Mucosa of descending colon (tissue), 3 donors: ENCODE measurements at regions of chr15 and their contacts with region 1.

Region 1: GRCh38 chr15:99143655-99144610 is 39.1 kb downstream of the SYNM start:
- DNase-seq: peak in 1 of 3 donors; percentile 19
- ATAC-seq: peak; percentile 84
- H3K4me3 ChIP-seq: no peak overlapping the region
- H3K4me1 ChIP-seq: peaks cover 8% of the 10 kb centered on the region
- CTCF ChIP-seq: no peak

Region 2: GRCh38 chr15:98760112-98760826 is 383.7 kb before region 1 on chr15:
- intact Hi-C with region 1: no loop called
- DNase-seq: no peak
- ATAC-seq: no peak
- H3K4me3 ChIP-seq: no peak overlapping the region
- H3K4me1 ChIP-seq: no peaks in the 10 kb centered on the region
- CTCF ChIP-seq: no peak

Region 3: GRCh38 chr15:99197856-99198255 is 53.9 kb after region 1 on chr15:
- intact Hi-C with region 1: loop called in 1 of 2 experiments (anchors 5 kb)
- DNase-seq: no peak
- ATAC-seq: no peak
- H3K4me3 ChIP-seq: no peak overlapping the region
- H3K4me1 ChIP-seq: no peaks in the 10 kb centered on the region
- CTCF ChIP-seq: no peak

Region 4: GRCh38 chr15:99421172-99421656 is 277.3 kb after region 1 on chr15:
- intact Hi-C with region 1: no loop called
- DNase-seq: peak; percentile 57 to 75 (median 67)
- ATAC-seq: peak; percentile 66
- H3K4me3 ChIP-seq: no peak overlapping the region
- H3K4me1 ChIP-seq: no peaks in the 10 kb centered on the region
- CTCF ChIP-seq: no peak